ENCODE measurements at regions of chr14 and their contacts with region 1.

Region 1: GRCh38 chr14:50532502-50533240 is at the start of gene MAP4K5:
- DNase-seq: peak; percentile 94
- ATAC-seq: peak; percentile 99
- total RNA-seq, gene MAP4K5: 94.6 TPM

Region 2: GRCh38 chr14:50148799-50149198 is 383.9 kb before region 1 on chr14:
- intact Hi-C with region 1: loop called (anchors 5 kb)
- DNase-seq: no peak
- ATAC-seq: no peak

Region 3: GRCh38 chr14:50321009-50321660 is 211.5 kb before region 1 on chr14:
- intact Hi-C with region 1: loop called (anchors 2 kb)
- DNase-seq: peak; percentile 78
- ATAC-seq: peak; percentile 96